AG04450 (cell line): ENCODE measurements at regions of chr20 and their contacts with region 1.

Region 1: GRCh38 chr20:45934586-45935415 is at the start of gene PCIF1:
- DNase-seq: peak; percentile 98
- H3K4me3 ChIP-seq: peak within 1 kb of the TSS; percentile 92
- H3K27ac ChIP-seq: peak within 1 kb of the TSS; percentile 98
- H3K27me3 ChIP-seq: no peaks in the 10 kb centered on the region
- CTCF ChIP-seq: no peak
- polyA plus RNA-seq, gene PCIF1: 11.5 and 14.6 TPM in 2 replicates

Region 2: GRCh38 chr20:45850926-45851325 is 83.9 kb before region 1 on chr20:
- CTCF ChIA-PET with region 1: no interaction called
- POLR2A ChIA-PET with region 1: no interaction called
- DNase-seq: no peak
- H3K4me3 ChIP-seq: no peak overlapping the region
- H3K27ac ChIP-seq: no peak overlapping the region
- H3K27me3 ChIP-seq: no peaks in the 10 kb centered on the region
- CTCF ChIP-seq: no peak

Region 3: DNA sequence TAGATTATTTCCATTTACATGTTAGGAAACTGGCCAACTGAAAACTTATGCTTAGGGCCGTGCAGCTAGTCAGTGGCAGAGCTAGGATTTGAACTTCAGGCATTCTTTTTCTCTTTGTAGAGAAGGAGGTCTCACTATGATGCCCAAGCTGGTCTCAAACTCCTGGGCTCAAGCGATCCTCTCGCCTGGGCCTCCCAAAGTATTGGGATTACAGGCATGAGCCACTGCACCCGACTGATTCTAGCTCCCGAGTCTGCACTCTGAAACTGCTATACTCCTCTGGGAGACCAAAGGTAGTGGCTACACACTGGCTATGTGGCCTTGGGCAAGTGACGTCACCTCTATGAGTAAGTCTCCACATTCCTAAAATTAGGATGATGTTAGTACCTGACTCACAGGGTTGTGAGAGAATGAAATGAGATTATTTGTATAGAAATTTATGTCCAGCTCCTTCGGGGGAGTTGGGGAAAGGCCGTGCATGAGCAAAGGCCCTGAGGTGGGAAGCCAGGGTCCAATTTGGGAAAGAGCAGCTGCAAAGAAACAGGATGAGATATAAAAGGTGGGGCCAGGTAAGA is 29.2 kb before region 1 on chr20:
- CTCF ChIA-PET with region 1: no interaction called
- POLR2A ChIA-PET with region 1: interaction called, 57 read pairs
- DNase-seq: no peak
- H3K4me3 ChIP-seq: no peak overlapping the region
- H3K27ac ChIP-seq: peak overlapping the region; percentile 65
- H3K27me3 ChIP-seq: no peaks in the 10 kb centered on the region
- CTCF ChIP-seq: no peak

Region 4: GRCh38 chr20:45910670-45911485 is 23.9 kb before region 1 on chr20:
- CTCF ChIA-PET with region 1: no interaction called
- POLR2A ChIA-PET with region 1: interaction called, 57 read pairs
- DNase-seq: peak; percentile 99
- H3K4me3 ChIP-seq: peak overlapping the region; percentile 69
- H3K27ac ChIP-seq: peak overlapping the region; percentile 75
- H3K27me3 ChIP-seq: no peaks in the 10 kb centered on the region
- CTCF ChIP-seq: no peak

Region 5: DNA sequence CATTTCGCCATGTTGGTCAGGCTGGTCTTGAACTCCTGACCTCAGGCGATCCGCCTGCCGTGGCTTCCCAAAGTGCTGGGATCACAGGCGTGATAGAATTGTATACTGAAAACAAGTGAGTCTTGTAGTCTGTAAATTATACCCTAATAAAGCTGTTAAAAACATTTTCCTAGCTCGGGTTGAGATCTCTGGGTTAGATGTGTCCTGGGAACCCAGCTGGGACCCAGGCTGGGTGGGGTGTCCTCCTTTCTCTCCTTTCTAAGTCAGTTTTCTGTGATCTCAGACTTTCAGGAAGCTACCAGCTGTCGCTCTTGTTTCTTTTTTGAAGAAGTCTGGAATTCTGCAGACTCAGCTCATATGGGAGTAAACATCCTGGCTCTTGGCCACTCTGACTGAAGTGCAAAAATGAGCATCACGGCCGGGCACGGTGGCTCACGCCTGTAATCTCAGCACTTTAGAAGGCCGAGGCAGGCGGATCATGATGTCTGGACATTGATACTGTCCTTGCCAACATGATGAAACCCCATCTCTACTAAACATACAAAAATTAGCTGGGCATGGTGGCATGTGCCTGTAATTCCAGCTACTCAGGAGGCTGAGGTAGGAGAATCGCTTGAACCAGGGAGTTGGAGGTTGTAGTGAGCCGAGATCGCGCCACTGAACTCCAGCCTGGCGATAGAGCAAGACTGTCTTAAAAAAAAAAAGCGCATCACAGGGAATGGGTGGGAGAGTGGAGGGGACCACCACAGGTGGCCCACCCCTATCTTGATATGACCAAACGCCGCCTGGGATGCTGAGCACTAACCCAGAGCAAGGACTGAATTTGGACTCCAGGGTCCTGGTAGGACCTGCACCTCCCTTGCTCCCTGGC is 10.2 kb before region 1 on chr20:
- CTCF ChIA-PET with region 1: interaction called, 5 read pairs
- POLR2A ChIA-PET with region 1: interaction called, 47 read pairs
- DNase-seq: no peak
- H3K4me3 ChIP-seq: no peak overlapping the region
- H3K27ac ChIP-seq: peak overlapping the region; percentile 47
- H3K27me3 ChIP-seq: no peaks in the 10 kb centered on the region
- CTCF ChIP-seq: no peak

Region 6: GRCh38 chr20:45946149-45946970 is 11.6 kb after region 1 on chr20:
- CTCF ChIA-PET with region 1: interaction called, 3 read pairs
- POLR2A ChIA-PET with region 1: interaction called, 43 read pairs
- DNase-seq: no peak
- H3K4me3 ChIP-seq: no peak overlapping the region
- H3K27ac ChIP-seq: peak overlapping the region; percentile 2
- H3K27me3 ChIP-seq: no peaks in the 10 kb centered on the region
- CTCF ChIP-seq: no peak